ENCODE measurements at regions of chr7 and their contacts with region 1.

Region 1: GRCh38 chr7:148590471-148590870 is at the start of gene C7orf33:
- DNase-seq: no peak
- H3K4me3 ChIP-seq: no peak within 1 kb of the TSS
- H3K27ac ChIP-seq: no peak within 1 kb of the TSS
- H3K4me1 ChIP-seq: no peaks in the 10 kb centered on the region
- H3K27me3 ChIP-seq: peaks cover 0 to 7% of the 10 kb centered on the region in 2 donors
- CTCF ChIP-seq: no peak
- POLR2A ChIP-seq: no peak
- total RNA-seq, gene C7orf33: not detected

Region 2: DNA sequence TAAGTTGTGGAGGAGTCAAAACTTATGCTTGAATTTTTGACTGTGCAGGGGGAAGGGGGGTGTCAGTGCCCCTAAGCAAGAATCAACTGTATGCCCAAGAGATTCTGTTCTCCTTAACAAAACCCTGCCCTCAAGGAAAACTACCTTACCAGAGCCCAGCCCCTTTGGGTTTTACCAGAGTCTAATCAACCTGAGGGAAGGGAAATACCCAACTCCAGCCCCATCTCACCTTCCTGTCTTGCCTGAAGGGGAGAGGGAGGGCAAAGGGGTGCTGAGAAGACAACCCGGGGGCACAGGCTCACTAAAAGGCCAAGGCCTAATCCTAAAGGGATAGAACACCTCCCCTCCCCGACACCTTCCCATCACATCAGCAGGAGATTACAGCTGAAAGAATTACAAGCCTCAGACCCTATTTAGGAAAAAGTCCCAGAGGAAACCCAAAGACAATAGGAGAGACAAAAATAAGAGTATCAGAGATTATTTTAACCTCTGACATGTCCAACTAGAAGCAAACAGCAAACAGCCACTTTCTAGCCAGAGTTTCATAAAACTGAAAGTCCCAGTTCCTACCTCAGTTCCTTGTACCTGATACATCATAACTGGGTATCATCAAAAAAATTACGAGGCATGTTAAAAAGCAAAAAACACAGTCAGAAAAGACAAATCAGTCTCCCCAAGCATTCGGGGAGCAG is 26.7 kb before region 1 on chr7:
- intact Hi-C with region 1: no loop called
- DNase-seq: no peak
- H3K4me3 ChIP-seq: no peak overlapping the region
- H3K27ac ChIP-seq: peak overlapping the region in 1 of 2 donors; percentile 11
- H3K4me1 ChIP-seq: no peaks in the 10 kb centered on the region
- H3K27me3 ChIP-seq: no peaks in the 10 kb centered on the region
- CTCF ChIP-seq: no peak
- POLR2A ChIP-seq: no peak

Region 3: GRCh38 chr7:148615085-148615730 is 24.7 kb after region 1 on chr7:
- intact Hi-C with region 1: loop called (anchors 2 kb)
- DNase-seq: no peak
- H3K4me3 ChIP-seq: no peak overlapping the region
- H3K27ac ChIP-seq: no peak overlapping the region
- H3K4me1 ChIP-seq: no peaks in the 10 kb centered on the region
- H3K27me3 ChIP-seq: peaks cover 0 to 18% of the 10 kb centered on the region in 2 donors
- CTCF ChIP-seq: no peak
- POLR2A ChIP-seq: no peak